ENCODE measurements at regions of chr5 and their contacts with region 1.

Region 1: GRCh38 chr5:177592010-177592834 is at the start of gene TMED9:
- DNase-seq: peak; percentile 90
- H3K4me3 ChIP-seq: peak within 1 kb of the TSS; percentile 99
- H3K27ac ChIP-seq: peak within 1 kb of the TSS; percentile 85
- H3K4me1 ChIP-seq: peaks cover 10% of the 10 kb centered on the region
- H3K27me3 ChIP-seq: no peaks in the 10 kb centered on the region
- CTCF ChIP-seq: no peak
- total RNA-seq, gene TMED9: 187 to 303 TPM

Region 2: GRCh38 chr5:177516604-177517568 is 75.3 kb before region 1 on chr5 and contains the start of gene DDX41:
- intact Hi-C with region 1: loop called (anchors 10 kb)
- DNase-seq: peak; percentile 98
- H3K4me3 ChIP-seq: peak within 1 kb of the TSS; percentile 84
- H3K27ac ChIP-seq: peak within 1 kb of the TSS; percentile 78
- H3K4me1 ChIP-seq: peaks cover 10% of the 10 kb centered on the region
- H3K27me3 ChIP-seq: no peaks in the 10 kb centered on the region
- CTCF ChIP-seq: no peak
- total RNA-seq, gene DDX41: 84.3 to 134 TPM

Measured in colonic mucosa (tissue), 4 donors.